CD14-positive monocyte (primary cell): ENCODE measurements at regions of chr19 and their contacts with region 1.

Region 1: DNA sequence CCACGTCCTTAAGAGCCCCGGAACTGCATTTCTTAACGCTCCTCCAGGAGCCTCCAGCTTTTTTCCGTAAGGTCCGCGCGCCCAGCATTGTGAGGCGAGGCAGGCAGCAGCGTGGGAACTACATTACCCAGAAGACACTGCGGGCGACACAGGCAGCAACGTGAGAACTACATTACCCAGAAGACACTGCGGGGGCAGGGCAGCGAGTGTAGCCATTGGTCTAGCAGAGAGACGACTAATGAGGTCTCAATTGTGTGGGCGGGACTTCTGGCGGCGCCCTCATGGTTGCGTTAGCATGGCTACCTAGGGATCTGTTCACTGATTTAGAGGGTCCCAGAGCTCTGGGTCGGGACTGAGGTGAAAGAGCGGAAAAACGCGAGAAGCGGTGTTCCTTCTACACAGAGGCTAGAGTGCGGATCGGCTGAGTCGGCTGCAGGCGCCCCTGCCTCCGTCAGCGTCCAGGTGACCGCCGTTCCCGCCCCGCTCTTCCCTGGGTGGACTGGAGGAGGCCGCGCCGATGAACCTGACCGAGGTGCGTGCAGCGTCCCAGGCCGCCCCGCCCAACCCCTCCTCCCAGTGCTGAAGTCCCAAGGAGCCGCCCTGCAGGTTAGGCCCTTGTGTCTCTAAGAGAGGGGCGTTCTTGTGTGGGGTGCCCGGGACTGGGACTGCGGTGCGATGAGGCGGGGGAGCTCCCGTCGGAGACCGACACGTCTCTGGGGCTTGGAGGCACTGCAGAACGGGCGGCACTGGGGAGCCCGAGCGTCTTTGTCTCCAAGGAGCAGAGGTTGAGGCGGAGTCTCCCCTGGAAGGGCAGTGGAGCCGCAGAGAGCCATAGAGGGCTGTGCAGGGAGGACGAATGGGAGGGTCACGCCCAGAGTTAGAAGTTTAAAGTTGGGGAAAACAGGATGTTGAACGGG is at the start of gene ZNF749:
- DNase-seq: peak; percentile 94 to 98 (median 94)
- H3K4me3 ChIP-seq: peak within 1 kb of the TSS; percentile 66 to 80 (median 72)
- H3K4me3 Mint-ChIP-seq: peak within 1 kb of the TSS; percentile 91 to 96
- H3K27ac ChIP-seq: peak within 1 kb of the TSS in 1 of 2 donors; percentile 55
- H3K27ac Mint-ChIP-seq: peak within 1 kb of the TSS; percentile 49 to 89 (median 69)
- H3K4me1 ChIP-seq: peaks cover 13 to 20% of the 10 kb centered on the region in 2 donors
- H3K4me1 Mint-ChIP-seq: peaks cover 22% of the 10 kb centered on the region
- H3K27me3 ChIP-seq: no peaks in the 10 kb centered on the region
- H3K27me3 Mint-ChIP-seq: peaks cover 0 to 4% (median 1%) of the 10 kb centered on the region in 3 donors
- CTCF ChIP-seq: no peak
- polyA plus RNA-seq, gene ZNF749: 3.4 to 9.0 (median 3.7) TPM

Region 2: DNA sequence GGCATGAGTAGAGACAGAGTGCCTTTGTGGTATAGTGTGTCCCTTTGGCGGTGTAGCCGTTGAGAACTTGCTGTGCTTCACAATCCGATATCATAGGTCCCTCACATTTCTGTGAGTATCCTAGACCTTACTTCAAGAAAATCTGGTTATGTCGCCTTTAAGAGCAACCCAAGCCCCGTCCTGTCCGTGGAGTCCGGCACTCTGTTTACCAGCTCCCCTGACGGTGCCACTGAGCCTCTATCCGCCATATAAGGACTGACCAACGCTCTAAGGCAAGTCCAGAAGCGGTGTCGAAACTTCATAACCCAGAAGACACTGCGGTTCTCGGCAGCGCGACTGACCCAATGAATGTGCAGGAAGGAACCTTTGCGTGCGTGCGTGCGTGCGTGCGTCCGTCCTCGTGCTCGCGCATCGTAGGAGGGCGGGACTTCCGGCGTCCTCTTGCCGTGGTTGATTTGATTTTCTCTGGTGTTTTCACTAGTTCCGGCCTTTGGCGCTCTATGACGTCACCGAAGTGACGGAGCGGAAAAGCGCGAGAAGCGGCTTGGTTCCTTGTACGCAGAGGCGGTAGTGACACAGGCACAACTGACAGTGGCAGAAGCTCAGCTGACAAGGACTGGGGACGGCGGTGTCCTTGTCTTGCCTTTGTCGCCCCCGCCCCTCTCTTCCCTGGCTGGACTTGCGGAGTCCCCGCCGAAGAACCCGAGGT is 72.2 kb before region 1 on chr19 and contains the starts of genes TRAPPC2B and ZNF547:
- intact Hi-C with region 1: loop called in 1 of 2 experiments (anchors 10 kb)
- DNase-seq: peak; percentile 97 to 100 (median 100)
- H3K4me3 ChIP-seq: peak within 1 kb of the TSS; percentile 40 to 76 (median 54)
- H3K4me3 Mint-ChIP-seq: peak within 1 kb of the TSS; percentile 81 to 86
- H3K27ac ChIP-seq: peak within 1 kb of the TSS; percentile 83 to 89
- H3K27ac Mint-ChIP-seq: peak within 1 kb of the TSS; percentile 85 to 97 (median 93)
- H3K4me1 ChIP-seq: peaks cover 12 to 14% of the 10 kb centered on the region in 2 donors
- H3K4me1 Mint-ChIP-seq: peaks cover 10% of the 10 kb centered on the region
- H3K27me3 ChIP-seq: no peaks in the 10 kb centered on the region
- H3K27me3 Mint-ChIP-seq: peaks cover 1 to 6% (median 4%) of the 10 kb centered on the region in 3 donors
- CTCF ChIP-seq: no peak
- polyA plus RNA-seq, gene TRAPPC2B: 7.4 to 13.9 (median 11.5) TPM
- polyA plus RNA-seq, gene ZNF547: 0.30 to 0.32 TPM in 2 of 3 donors, not detected in the other

Region 3: DNA sequence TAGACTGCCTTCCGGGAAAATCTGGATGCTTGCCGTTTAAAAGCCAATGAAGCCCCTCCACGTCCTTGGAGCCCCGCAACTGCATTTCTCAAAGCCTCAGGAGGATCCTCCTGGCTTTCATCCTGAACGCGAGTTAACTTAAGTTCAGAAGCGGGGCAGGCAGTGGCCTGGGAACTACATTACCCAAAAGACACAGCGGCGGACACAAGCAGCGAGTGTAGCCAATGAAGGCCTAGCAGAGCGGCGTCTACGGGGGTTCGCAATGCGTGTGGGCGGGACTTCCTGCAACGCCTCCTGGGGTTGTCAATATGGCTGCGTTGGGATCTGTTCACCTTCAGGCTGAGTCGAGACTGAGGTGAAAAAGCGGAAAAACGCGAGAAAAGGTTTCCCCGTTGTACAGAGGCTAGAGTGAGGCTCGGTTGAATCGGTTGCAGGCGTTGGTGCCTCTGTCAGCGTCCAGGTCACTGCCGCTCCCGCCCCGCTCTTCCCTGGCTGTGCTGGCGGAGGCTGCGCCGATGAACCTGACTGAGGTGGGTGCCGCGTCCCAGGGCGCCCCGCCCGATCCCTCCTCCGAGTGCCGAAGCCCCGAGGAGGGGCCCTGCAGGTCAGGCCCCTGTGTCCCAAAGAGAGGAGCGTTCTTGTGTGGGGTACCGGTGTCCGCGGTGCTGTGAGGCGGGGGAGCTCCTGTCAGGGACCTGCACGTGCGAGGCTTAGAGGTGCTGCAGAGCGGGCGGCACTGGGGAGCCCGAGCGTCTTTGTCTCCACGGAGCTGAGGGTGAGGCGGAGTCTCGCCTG is 24.2 kb before region 1 on chr19 and contains the start of gene ZNF17:
- intact Hi-C with region 1: loop called (anchors 2 kb)
- DNase-seq: peak; percentile 87 to 94 (median 90)
- H3K4me3 ChIP-seq: peak within 1 kb of the TSS; percentile 77 to 95 (median 91)
- H3K4me3 Mint-ChIP-seq: peak within 1 kb of the TSS; percentile 94 to 96
- H3K27ac ChIP-seq: peak within 1 kb of the TSS; percentile 10 to 81
- H3K27ac Mint-ChIP-seq: peak within 1 kb of the TSS; percentile 23 to 95 (median 78)
- H3K4me1 ChIP-seq: peaks cover 14 to 17% of the 10 kb centered on the region in 2 donors
- H3K4me1 Mint-ChIP-seq: peaks cover 14% of the 10 kb centered on the region
- H3K27me3 ChIP-seq: no peaks in the 10 kb centered on the region
- H3K27me3 Mint-ChIP-seq: peaks cover 0 to 3% (median 0%) of the 10 kb centered on the region in 3 donors
- CTCF ChIP-seq: no peak
- polyA plus RNA-seq, gene ZNF17: 1.4 to 3.3 (median 2.3) TPM

Region 4: DNA sequence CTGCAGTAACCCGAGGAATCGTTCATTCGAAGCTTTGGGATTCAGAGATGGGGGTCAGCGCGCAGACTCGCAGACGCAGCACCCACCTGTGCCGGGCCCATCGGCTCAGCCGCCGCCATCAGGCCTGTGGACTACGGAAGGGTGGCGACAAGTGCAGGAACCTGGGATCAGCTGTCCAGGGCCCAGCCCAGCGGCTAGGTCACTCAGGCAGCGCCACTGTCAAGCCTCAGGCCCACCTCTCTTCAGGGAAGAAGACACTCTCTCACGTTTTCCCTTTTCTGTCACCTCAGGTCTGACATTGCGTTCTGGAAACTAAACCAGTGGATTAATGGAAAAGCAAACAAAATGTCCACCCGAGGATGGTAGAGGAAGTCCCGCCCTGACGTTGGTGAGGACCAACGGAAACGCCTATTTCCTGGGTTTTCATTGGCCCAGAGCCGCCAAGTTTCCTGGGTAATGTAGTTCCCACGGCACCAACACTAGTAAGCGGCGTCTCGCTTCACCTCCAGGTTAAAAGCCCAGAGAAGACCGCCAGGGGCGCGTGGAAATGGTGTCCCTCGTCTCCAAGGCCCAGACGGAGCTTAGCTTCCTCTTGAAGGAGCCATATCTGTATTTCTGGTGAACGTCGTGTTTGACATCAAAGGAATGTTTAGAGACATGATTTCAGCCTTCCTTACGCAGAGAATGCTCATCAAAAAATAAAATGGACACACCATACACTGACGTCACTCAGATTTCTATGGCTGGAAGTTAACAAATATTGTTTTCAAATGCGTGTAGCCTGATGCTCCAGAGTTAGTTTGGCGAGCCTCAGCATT is 42.1 kb after region 1 on chr19 and contains the start of gene ZNF772:
- intact Hi-C with region 1: loop called (anchors 5 to 10 kb)
- DNase-seq: peak; percentile 90 to 95 (median 93)
- H3K4me3 ChIP-seq: peak within 1 kb of the TSS; percentile 82 to 95 (median 87)
- H3K4me3 Mint-ChIP-seq: peak within 1 kb of the TSS; percentile 79 to 92
- H3K27ac ChIP-seq: peak within 1 kb of the TSS; percentile 51 to 91
- H3K27ac Mint-ChIP-seq: peak within 1 kb of the TSS; percentile 67 to 92 (median 88)
- H3K4me1 ChIP-seq: peaks cover 12 to 15% of the 10 kb centered on the region in 2 donors
- H3K4me1 Mint-ChIP-seq: peaks cover 13% of the 10 kb centered on the region
- H3K27me3 ChIP-seq: no peaks in the 10 kb centered on the region
- H3K27me3 Mint-ChIP-seq: peaks cover 0 to 2% (median 0%) of the 10 kb centered on the region in 3 donors
- CTCF ChIP-seq: peak; percentile 73
- polyA plus RNA-seq, gene ZNF772: 0.32 to 1.2 (median 0.99) TPM